ENCODE measurements at regions of chr4 and their contacts with region 1.

Region 1: DNA sequence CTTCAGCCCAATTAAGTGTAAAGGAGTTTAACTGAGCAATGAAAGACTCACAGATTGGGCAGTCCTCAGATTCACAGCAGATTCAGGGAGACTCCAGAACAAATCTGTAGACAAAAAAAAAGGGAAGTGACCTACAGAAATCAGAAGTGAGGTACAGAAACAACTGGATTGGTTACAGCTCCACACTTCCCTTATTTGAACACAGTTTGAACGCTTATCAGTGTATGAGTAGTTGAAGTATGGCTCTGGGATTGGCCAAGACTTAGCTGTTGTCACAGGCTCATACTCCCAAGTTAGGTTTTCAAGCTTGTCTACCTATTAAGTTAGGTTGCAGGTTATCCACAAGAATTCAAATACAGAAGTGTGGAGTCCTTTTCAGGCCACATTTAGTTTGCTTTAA is 112.4 kb upstream of the ELOVL6 start:
- DNase-seq: no peak
- ATAC-seq: no peak
- H3K4me3 Mint-ChIP-seq: no peak overlapping the region
- H3K27ac Mint-ChIP-seq: no peak overlapping the region
- H3K4me1 Mint-ChIP-seq: no peaks in the 10 kb centered on the region
- H3K27me3 Mint-ChIP-seq: no peaks in the 10 kb centered on the region
- CTCF ChIP-seq: no peak

Region 2: GRCh38 chr4:110062166-110062565 is 248.6 kb before region 1 on chr4:
- CTCF ChIA-PET with region 1: no interaction called
- POLR2A ChIA-PET with region 1: no interaction called
- DNase-seq: no peak
- ATAC-seq: no peak
- H3K4me3 Mint-ChIP-seq: no peak overlapping the region
- H3K27ac Mint-ChIP-seq: no peak overlapping the region
- H3K4me1 Mint-ChIP-seq: no peaks in the 10 kb centered on the region
- H3K27me3 Mint-ChIP-seq: no peaks in the 10 kb centered on the region
- CTCF ChIP-seq: no peak

Region 3: GRCh38 chr4:110510955-110511544 is 200.3 kb after region 1 on chr4:
- CTCF ChIA-PET with region 1: interaction called, 10 read pairs
- POLR2A ChIA-PET with region 1: no interaction called
- DNase-seq: no peak
- ATAC-seq: no peak
- H3K4me3 Mint-ChIP-seq: no peak overlapping the region
- H3K27ac Mint-ChIP-seq: no peak overlapping the region
- H3K4me1 Mint-ChIP-seq: peaks cover 6% of the 10 kb centered on the region; the same call in 1 of the 2 replicates
- H3K27me3 Mint-ChIP-seq: no peaks in the 10 kb centered on the region
- CTCF ChIP-seq: peak; percentile 61

Region 4: GRCh38 chr4:110516106-110516922 is 205.5 kb after region 1 on chr4:
- CTCF ChIA-PET with region 1: interaction called, 11 read pairs
- POLR2A ChIA-PET with region 1: no interaction called
- DNase-seq: peak; percentile 81
- ATAC-seq: peak; percentile 99
- H3K4me3 Mint-ChIP-seq: no peak overlapping the region
- H3K27ac Mint-ChIP-seq: no peak overlapping the region
- H3K4me1 Mint-ChIP-seq: peaks cover 10% of the 10 kb centered on the region
- H3K27me3 Mint-ChIP-seq: no peaks in the 10 kb centered on the region
- CTCF ChIP-seq: peak; percentile 56

Measured in WTC11 (cell line).